Heart right ventricle (tissue), 16 donors: ENCODE measurements at regions of chr15 and their contacts with region 1.

Region 1: DNA sequence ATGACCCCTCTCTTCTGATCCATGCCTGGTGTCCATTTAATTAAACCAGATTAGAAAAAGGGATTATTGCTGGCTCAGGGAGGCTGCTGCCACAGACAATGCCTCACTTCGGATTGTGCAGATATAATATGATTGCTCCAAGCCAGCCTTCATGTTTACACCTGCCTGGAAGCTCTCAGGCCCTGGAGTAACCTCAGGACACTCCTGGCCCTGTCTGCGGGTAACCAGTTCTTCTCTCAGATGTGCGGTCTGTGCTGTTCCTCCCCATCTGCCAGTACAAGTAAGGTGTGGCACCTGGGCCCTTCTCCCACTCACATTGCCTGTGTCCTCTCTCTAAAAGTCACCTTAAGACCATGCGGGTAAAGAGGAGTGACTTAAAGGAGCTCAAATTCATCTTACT is 8.8 kb upstream of the GOLGA8J start:
- DNase-seq: no peak
- ATAC-seq: no peak
- H3K4me3 ChIP-seq: no peak overlapping the region
- H3K27ac ChIP-seq: no peak overlapping the region
- H3K4me1 ChIP-seq: no peaks in the 10 kb centered on the region
- H3K27me3 ChIP-seq: peaks cover 0 to 17% (median 6%) of the 10 kb centered on the region in 7 donors
- CTCF ChIP-seq: no peak

Region 2: GRCh38 chr15:29668120-29668602 is 405.8 kb before region 1 on chr15:
- intact Hi-C with region 1: loop called in 8 of 10 experiments (anchors 5 to 10 kb)
- DNase-seq: peak; percentile 48 to 74
- ATAC-seq: peak; percentile 73 to 95 (median 92)
- H3K4me3 ChIP-seq: no peak overlapping the region
- H3K27ac ChIP-seq: no peak overlapping the region
- H3K4me1 ChIP-seq: peaks cover 0 to 7% (median 0%) of the 10 kb centered on the region in 9 donors
- H3K27me3 ChIP-seq: peaks cover 0 to 18% (median 0%) of the 10 kb centered on the region in 7 donors
- CTCF ChIP-seq: peak; percentile 68 to 90 (median 78)

Region 3: GRCh38 chr15:29674661-29675533 is 399.0 kb before region 1 on chr15:
- intact Hi-C with region 1: loop called in 2 of 10 experiments (anchors 10 kb)
- DNase-seq: peak; percentile 39 to 58
- ATAC-seq: peak; percentile 67 to 80 (median 74)
- H3K4me3 ChIP-seq: peak overlapping the region in 9 of 10 donors; percentile 47 to 70 (median 59)
- H3K27ac ChIP-seq: no peak overlapping the region
- H3K4me1 ChIP-seq: peaks cover 0 to 19% (median 7%) of the 10 kb centered on the region in 9 donors
- H3K27me3 ChIP-seq: peaks cover 0 to 29% (median 0%) of the 10 kb centered on the region in 7 donors
- CTCF ChIP-seq: no peak

Region 4: GRCh38 chr15:29942143-29942542 is 131.8 kb before region 1 on chr15:
- intact Hi-C with region 1: loop called in 1 of 10 experiments (anchors 10 kb)
- DNase-seq: no peak
- ATAC-seq: peak in 1 of 8 donors; percentile 49
- H3K4me3 ChIP-seq: no peak overlapping the region
- H3K27ac ChIP-seq: no peak overlapping the region
- H3K4me1 ChIP-seq: peaks cover 0 to 1% (median 0%) of the 10 kb centered on the region in 9 donors
- H3K27me3 ChIP-seq: no peaks in the 10 kb centered on the region
- CTCF ChIP-seq: peak in 8 of 9 donors; percentile 11 to 51 (median 34)

Region 5: GRCh38 chr15:29967956-29968889 is 105.7 kb before region 1 on chr15:
- intact Hi-C with region 1: loop called in 1 of 10 experiments (anchors 10 kb)
- DNase-seq: no peak
- ATAC-seq: peak in 1 of 8 donors; percentile 67
- H3K4me3 ChIP-seq: peak overlapping the region in 9 of 10 donors; percentile 29 to 49 (median 41)
- H3K27ac ChIP-seq: no peak overlapping the region
- H3K4me1 ChIP-seq: peaks cover 0 to 4% (median 0%) of the 10 kb centered on the region in 9 donors
- H3K27me3 ChIP-seq: peaks cover 0 to 70% (median 31%) of the 10 kb centered on the region in 7 donors
- CTCF ChIP-seq: no peak

Region 6: DNA sequence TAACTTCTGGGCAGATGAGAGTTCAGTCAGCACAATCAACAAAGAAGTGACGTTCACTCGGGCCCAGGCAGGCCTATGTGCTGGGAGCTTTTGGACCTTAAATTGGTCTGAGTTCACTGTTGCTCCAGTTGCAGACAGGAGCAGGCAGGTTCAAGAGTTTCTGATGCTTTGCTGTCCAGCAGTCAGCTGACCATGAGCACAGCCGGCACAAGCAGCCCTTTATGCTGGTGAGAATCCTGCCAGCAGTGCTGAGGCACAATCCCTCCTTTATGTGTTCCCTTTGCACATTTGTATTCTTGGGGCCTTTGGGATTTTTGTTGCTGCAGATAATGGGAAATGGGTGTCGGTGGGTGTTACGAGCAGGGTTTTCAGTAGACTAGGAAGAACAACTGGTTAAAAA is 72.3 kb before region 1 on chr15:
- intact Hi-C with region 1: no loop called
- DNase-seq: peak in 1 of 2 donors; percentile 7
- ATAC-seq: peak in 3 of 8 donors; percentile 44 to 55 (median 52)
- H3K4me3 ChIP-seq: no peak overlapping the region
- H3K27ac ChIP-seq: no peak overlapping the region
- H3K4me1 ChIP-seq: no peaks in the 10 kb centered on the region
- H3K27me3 ChIP-seq: peaks cover 0 to 5% (median 0%) of the 10 kb centered on the region in 7 donors
- CTCF ChIP-seq: no peak

Region 7: GRCh38 chr15:30023798-30024295 is 50.1 kb before region 1 on chr15:
- intact Hi-C with region 1: loop called in 1 of 10 experiments (anchors 2 kb)
- DNase-seq: peak in 1 of 2 donors; percentile 9
- ATAC-seq: no peak
- H3K4me3 ChIP-seq: no peak overlapping the region
- H3K27ac ChIP-seq: no peak overlapping the region
- H3K4me1 ChIP-seq: no peaks in the 10 kb centered on the region
- H3K27me3 ChIP-seq: peaks cover 0 to 14% (median 0%) of the 10 kb centered on the region in 7 donors
- CTCF ChIP-seq: no peak